ENCODE measurements at regions of chr2 and their contacts with region 1.

Region 1: DNA sequence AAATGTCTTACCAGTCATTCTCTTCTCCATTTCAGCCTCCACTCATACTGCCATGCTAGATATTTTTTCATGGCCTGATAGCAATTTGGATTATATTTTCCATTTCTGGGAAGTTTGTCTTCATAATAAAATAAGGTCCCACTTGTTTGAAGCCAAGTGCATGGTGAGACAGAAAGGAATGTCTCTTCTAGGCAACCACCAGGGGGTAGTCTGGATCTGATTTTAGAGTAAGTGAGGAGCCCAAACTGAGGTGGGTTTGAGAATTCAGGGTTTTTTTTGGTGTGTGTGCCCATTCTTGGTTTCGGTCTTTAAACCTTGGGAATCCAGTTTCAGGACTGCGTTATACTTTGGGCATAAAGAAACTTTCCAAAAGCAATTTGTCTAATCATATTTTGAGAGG is 315.5 kb downstream of the RPRM start:
- DNase-seq: no peak
- ATAC-seq: peak; percentile 79
- H3K4me3 ChIP-seq: no peak overlapping the region
- H3K27ac ChIP-seq: no peak overlapping the region
- H3K4me1 ChIP-seq: no peaks in the 10 kb centered on the region
- H3K27me3 ChIP-seq: no peaks in the 10 kb centered on the region; a peak in 1 of 4 replicates
- CTCF ChIP-seq: peak; percentile 48 to 55 (median 51); a peak in 5 of 6 replicates
- EP300 ChIP-seq: no peak
- POLR2A ChIP-seq: no peak
- RAD21 ChIP-seq: peak; percentile 73

Region 2: GRCh38 chr2:153101187-153101586 is 61.9 kb before region 1 on chr2:
- CTCF ChIA-PET with region 1: no interaction called
- POLR2A ChIA-PET with region 1: no interaction called
- RAD21 ChIA-PET with region 1: no interaction called
- SMC1A ChIA-PET with region 1: no interaction called
- in situ Hi-C with region 1: no loop called
- intact Hi-C with region 1: no loop called
- DNase-seq: no peak
- ATAC-seq: no peak
- H3K4me3 ChIP-seq: no peak overlapping the region
- H3K27ac ChIP-seq: no peak overlapping the region
- H3K4me1 ChIP-seq: no peaks in the 10 kb centered on the region
- H3K27me3 ChIP-seq: no peaks in the 10 kb centered on the region
- CTCF ChIP-seq: no peak
- EP300 ChIP-seq: no peak
- POLR2A ChIP-seq: no peak
- RAD21 ChIP-seq: no peak

Region 3: GRCh38 chr2:153287110-153287801 is 124.2 kb after region 1 on chr2:
- CTCF ChIA-PET with region 1: interaction called, 3 read pairs
- POLR2A ChIA-PET with region 1: no interaction called
- RAD21 ChIA-PET with region 1: no interaction called
- SMC1A ChIA-PET with region 1: no interaction called
- in situ Hi-C with region 1: no loop called
- intact Hi-C with region 1: loop called (anchors 2 kb)
- DNase-seq: no peak
- ATAC-seq: peak; percentile 61
- H3K4me3 ChIP-seq: no peak overlapping the region
- H3K27ac ChIP-seq: no peak overlapping the region
- H3K4me1 ChIP-seq: no peaks in the 10 kb centered on the region
- H3K27me3 ChIP-seq: no peaks in the 10 kb centered on the region
- CTCF ChIP-seq: peak; percentile 19 to 38 (median 37); a peak in 3 of 6 replicates
- EP300 ChIP-seq: no peak
- POLR2A ChIP-seq: no peak
- RAD21 ChIP-seq: 0 out of 2 replicates have a peak, but pooled peaks have one; percentile 17

Measured in GM12878 (cell line).